HepG2 (cell line): ENCODE measurements at regions of chr9 and their contacts with region 1.

Region 1: DNA sequence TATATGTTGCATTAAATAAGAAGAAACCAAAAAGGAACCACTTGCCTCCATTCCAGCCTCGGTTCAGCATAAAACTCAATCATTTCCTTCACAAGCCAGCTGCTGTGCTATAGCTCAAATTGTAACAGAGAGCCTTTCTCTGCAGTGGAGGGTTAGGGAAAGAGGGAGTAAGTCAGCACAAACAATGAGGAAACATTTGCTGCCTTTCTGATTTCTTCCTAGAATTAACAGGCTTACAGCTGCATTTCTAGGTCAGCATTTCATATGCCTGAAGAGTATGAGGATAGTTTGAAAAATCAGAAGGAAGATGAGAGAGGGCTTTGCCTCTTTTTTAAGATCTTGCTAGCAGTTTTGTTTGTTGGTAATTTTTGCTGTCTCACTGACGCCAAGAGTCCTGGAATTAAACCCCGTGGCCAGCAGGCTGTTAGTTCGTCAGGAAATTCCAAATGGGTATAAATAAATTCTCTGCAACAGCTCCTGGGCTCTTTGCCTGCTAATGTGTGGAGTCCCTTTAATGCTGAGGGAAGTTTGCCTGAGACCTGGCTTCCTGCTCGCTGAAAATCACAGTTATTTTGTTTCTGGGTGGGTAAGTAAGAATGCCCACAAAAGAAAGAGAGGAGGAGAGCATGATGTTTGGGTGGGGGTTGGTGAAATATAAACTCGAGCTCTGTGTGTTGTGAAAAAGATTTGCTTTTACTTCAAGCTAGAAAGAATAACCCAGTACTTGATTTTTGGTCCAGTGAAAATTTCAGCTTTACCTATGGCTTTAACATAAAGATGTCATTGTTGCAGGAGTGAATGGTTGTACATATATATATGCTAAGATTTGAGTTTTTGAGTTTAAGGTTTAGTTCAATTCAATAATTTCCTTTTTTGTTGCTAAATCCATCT is 148.1 kb upstream of the DMRT1 start:
- DNase-seq: peak; percentile 49
- ATAC-seq: peak; percentile 60; the same call in 2 of the 3 replicates
- H3K4me3 ChIP-seq: peak overlapping the region in 2 of 3 experiments; percentile 17 to 25; a peak in 1 of 6 replicates
- H3K27ac ChIP-seq: peak overlapping the region; percentile 49
- H3K4me1 ChIP-seq: peaks cover 97% of the 10 kb centered on the region
- H3K27me3 ChIP-seq: no peaks in the 10 kb centered on the region
- CTCF ChIP-seq: no peak
- EP300 ChIP-seq: no peak
- POLR2A ChIP-seq: no peak
- RAD21 ChIP-seq: no peak

Region 2: GRCh38 chr9:738209-738915 is 44.9 kb after region 1 on chr9:
- CTCF ChIA-PET with region 1: no interaction called
- POLR2A ChIA-PET with region 1: no interaction called
- in situ Hi-C with region 1: no loop called
- intact Hi-C with region 1: loop called (anchors 1 kb)
- DNase-seq: no peak
- ATAC-seq: no peak
- H3K4me3 ChIP-seq: no peak overlapping the region
- H3K27ac ChIP-seq: no peak overlapping the region
- H3K4me1 ChIP-seq: peaks cover 36% of the 10 kb centered on the region
- H3K27me3 ChIP-seq: no peaks in the 10 kb centered on the region
- CTCF ChIP-seq: no peak
- EP300 ChIP-seq: no peak
- POLR2A ChIP-seq: no peak
- RAD21 ChIP-seq: no peak